Activated CD8-positive, alpha-beta memory T cell treated with anti-CD3 and anti-CD28 coated beads, Interleukin-2, amount 10 ng/mL, durations not matched to agents 7 days and 5 days (primary cell): ENCODE measurements at regions of chr19 and their contacts with region 1.

Region 1: GRCh38 chr19:14347999-14348889 is 33.0 kb upstream of the ADGRE5 start:
- DNase-seq: peak; percentile 71
- ATAC-seq: peak; percentile 77
- H3K4me3 Mint-ChIP-seq: peak overlapping the region; percentile 61
- H3K27ac Mint-ChIP-seq: peak overlapping the region; percentile 54
- H3K4me1 Mint-ChIP-seq: peaks cover 20% of the 10 kb centered on the region
- H3K27me3 Mint-ChIP-seq: no peaks in the 10 kb centered on the region

Region 2: GRCh38 chr19:14198384-14199376 is 149.6 kb before region 1 on chr19:
- CTCF ChIA-PET with region 1: interaction called, 35 read pairs
- DNase-seq: no peak
- ATAC-seq: no peak
- H3K4me3 Mint-ChIP-seq: no peak overlapping the region
- H3K27ac Mint-ChIP-seq: no peak overlapping the region
- H3K4me1 Mint-ChIP-seq: peaks cover 13% of the 10 kb centered on the region
- H3K27me3 Mint-ChIP-seq: peaks cover 4% of the 10 kb centered on the region

Region 3: DNA sequence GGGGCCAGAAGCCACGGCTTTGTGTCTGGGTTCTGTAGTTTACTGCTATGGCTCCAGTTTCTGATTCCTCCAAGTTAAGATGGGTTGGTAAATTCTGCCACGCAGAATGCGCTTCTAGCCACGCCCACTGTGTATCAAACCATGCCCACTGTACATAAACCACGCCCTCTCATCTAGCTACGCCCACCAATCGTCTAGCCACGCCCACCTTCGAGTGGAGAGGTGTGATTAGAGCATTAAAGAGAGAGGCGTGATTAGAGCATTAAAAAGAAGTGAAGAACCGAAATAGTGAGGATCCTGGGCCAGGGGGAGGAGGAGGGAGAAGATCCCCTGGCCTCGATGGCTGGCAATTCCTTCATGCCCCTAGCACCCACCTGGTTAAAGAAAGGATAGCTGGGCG is 10.7 kb before region 1 on chr19:
- CTCF ChIA-PET with region 1: interaction called, 25 read pairs
- DNase-seq: peak; percentile 48
- ATAC-seq: peak; percentile 42
- H3K4me3 Mint-ChIP-seq: no peak overlapping the region
- H3K27ac Mint-ChIP-seq: no peak overlapping the region
- H3K4me1 Mint-ChIP-seq: peaks cover 5% of the 10 kb centered on the region
- H3K27me3 Mint-ChIP-seq: no peaks in the 10 kb centered on the region

Region 4: DNA sequence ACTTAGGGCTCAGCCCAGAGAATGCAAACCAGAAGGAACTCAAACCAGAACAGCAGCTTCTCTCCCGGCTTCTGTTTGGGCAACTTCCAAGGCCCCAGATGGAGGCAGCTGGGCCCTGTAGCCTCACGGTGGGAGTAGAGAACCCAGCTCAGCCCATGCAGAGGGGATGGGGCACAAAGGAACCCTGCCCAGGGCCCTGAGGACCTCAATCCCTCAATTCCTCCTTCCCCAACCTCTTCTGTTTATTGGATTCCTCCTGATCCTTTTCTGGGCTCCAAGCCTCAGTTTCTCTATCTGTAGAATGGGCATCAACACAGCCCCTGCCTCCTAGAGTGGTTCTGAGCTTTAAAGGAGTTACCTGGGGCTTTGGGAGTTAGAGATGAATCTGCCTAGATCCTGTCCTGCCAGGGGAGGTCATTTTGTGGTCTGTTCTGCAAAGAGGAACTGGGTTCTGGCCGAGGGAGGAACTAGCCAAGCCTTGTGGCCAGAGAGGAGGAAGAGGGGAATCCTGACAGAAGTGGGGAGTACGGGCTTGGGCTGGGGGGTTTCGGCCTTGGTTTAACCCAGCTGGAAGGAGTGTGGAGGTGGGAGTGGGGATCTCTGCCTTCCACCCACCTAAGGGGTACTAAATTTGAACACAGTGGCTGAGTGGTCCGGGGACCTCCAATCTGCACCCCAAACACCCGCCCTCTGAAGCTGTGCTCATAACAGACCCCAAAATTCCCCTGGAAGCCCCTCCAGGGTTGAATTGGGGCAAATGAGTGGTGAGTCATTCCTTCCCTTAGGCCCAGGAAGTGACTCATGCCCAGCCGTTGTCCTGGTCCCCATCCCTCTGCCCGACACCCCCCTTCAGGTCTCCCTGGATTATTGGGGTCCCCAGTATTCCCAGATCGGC is 35.7 kb after region 1 on chr19:
- CTCF ChIA-PET with region 1: interaction called, 13 read pairs
- DNase-seq: peak; percentile 83
- ATAC-seq: peak; percentile 25
- H3K4me3 Mint-ChIP-seq: peak overlapping the region; percentile 98
- H3K27ac Mint-ChIP-seq: peak overlapping the region; percentile 97
- H3K4me1 Mint-ChIP-seq: peaks cover 38% of the 10 kb centered on the region
- H3K27me3 Mint-ChIP-seq: no peaks in the 10 kb centered on the region

Region 5: GRCh38 chr19:14394167-14394566 is 45.9 kb after region 1 on chr19:
- CTCF ChIA-PET with region 1: no interaction called
- DNase-seq: no peak
- ATAC-seq: peak; percentile 3
- H3K4me3 Mint-ChIP-seq: no peak overlapping the region
- H3K27ac Mint-ChIP-seq: no peak overlapping the region
- H3K4me1 Mint-ChIP-seq: no peaks in the 10 kb centered on the region
- H3K27me3 Mint-ChIP-seq: no peaks in the 10 kb centered on the region

Region 6: DNA sequence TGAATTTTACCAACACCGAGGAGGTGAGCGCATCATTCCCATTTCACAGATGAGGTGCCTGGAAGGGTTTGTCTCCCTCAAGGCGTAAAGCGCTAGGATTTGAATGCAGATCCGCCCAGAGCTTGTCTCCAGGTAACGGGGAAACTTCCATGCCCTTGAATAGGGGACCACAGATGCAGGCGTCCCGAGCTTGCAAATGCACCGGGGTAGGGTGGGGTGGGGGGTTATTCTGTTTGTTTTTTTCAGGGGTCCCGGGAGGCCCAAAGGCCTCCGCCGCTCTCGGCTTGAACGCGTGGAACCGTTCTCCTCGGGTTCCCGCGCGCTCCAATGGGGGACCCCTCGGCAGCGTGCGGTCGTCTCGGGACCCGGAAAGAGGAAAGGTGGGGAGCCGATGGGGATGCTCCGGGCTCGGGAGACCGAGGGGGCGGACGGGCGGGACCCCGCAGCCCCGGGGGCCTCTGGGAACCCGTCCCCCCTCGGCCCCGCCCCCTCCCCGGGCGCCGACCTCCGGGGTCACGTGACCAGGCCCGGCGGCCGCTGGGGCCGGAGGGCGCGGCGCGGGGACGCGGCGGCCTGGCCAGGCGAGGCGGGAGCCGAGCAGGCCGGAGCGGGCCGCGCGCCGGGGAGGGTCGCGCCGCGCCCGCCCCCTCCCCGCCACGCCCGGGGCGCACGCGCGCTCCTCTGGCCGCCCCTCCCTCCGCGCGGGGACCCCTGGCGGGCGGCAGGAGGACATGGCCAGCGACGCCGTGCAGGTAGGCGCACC is 84.7 kb after region 1 on chr19 and contains the start of gene PKN1:
- CTCF ChIA-PET with region 1: no interaction called
- DNase-seq: peak; percentile 67
- ATAC-seq: peak; percentile 66
- H3K4me3 Mint-ChIP-seq: peak within 1 kb of the TSS; percentile 77
- H3K27ac Mint-ChIP-seq: peak within 1 kb of the TSS; percentile 76
- H3K4me1 Mint-ChIP-seq: peaks cover 32% of the 10 kb centered on the region
- H3K27me3 Mint-ChIP-seq: peaks cover 5% of the 10 kb centered on the region
- total RNA-seq, gene PKN1: 224 to 236 TPM